ENCODE measurements at regions of chr1 and their contacts with region 1.

Region 1: GRCh38 chr1:152189657-152190442 is 30.8 kb upstream of the RPTN start:
- DNase-seq: peak; percentile 48
- H3K4me3 Mint-ChIP-seq: peak overlapping the region; percentile 51
- H3K27ac Mint-ChIP-seq: no peak overlapping the region
- H3K4me1 Mint-ChIP-seq: peaks cover 4% of the 10 kb centered on the region
- H3K27me3 Mint-ChIP-seq: peaks cover 50% of the 10 kb centered on the region

Region 2: DNA sequence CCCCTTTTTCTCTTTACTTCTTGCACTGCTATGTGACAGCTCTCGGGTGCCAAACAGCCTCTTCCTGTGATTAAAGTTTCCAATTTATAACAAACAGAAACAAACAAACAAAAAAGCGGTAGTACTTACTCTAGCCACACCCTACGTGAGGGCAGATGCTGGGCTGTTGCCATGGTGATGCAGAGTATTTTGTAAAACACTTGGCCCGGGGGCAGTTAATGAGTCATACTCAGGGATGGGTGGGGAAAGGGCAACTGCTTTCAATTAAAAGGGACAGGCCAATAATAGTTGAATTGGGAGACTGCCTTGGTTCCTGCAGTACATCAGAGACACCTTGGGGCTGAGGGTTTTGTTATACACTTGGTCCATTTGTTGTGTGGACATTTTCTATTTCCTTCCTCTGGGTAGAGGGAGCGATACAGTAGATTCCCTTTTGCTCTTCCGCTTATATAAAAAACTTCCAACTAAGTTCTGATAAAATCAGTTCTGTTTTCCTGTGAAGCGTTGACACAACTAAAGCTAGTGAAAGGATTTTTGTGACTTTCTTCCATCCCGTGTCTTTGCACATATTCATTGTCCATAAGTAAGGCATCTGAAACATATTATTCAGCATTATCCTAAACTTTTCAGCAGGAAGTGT is 244.0 kb before region 1 on chr1:
- intact Hi-C with region 1: loop called (anchors 10 kb)
- DNase-seq: peak; percentile 81
- H3K4me3 Mint-ChIP-seq: peak overlapping the region; percentile 34
- H3K27ac Mint-ChIP-seq: peak overlapping the region; percentile 93
- H3K4me1 Mint-ChIP-seq: peaks cover 34% of the 10 kb centered on the region
- H3K27me3 Mint-ChIP-seq: no peaks in the 10 kb centered on the region

Region 3: GRCh38 chr1:152110860-152111514 is 78.9 kb before region 1 on chr1:
- intact Hi-C with region 1: loop called (anchors 2 kb)
- DNase-seq: peak; percentile 29
- H3K4me3 Mint-ChIP-seq: no peak overlapping the region
- H3K27ac Mint-ChIP-seq: no peak overlapping the region
- H3K4me1 Mint-ChIP-seq: peaks cover 2% of the 10 kb centered on the region
- H3K27me3 Mint-ChIP-seq: peaks cover 3% of the 10 kb centered on the region

Region 4: GRCh38 chr1:152347116-152347728 is 157.4 kb after region 1 on chr1:
- intact Hi-C with region 1: loop called (anchors 2 kb)
- DNase-seq: peak; percentile 16
- H3K4me3 Mint-ChIP-seq: no peak overlapping the region
- H3K27ac Mint-ChIP-seq: no peak overlapping the region
- H3K4me1 Mint-ChIP-seq: no peaks in the 10 kb centered on the region
- H3K27me3 Mint-ChIP-seq: peaks cover 31% of the 10 kb centered on the region

Region 5: GRCh38 chr1:152440635-152441471 is 251.0 kb after region 1 on chr1:
- intact Hi-C with region 1: loop called (anchors 5 kb)
- DNase-seq: peak; percentile 54
- H3K4me3 Mint-ChIP-seq: no peak overlapping the region
- H3K27ac Mint-ChIP-seq: no peak overlapping the region
- H3K4me1 Mint-ChIP-seq: peaks cover 1% of the 10 kb centered on the region
- H3K27me3 Mint-ChIP-seq: peaks cover 25% of the 10 kb centered on the region

Region 6: DNA sequence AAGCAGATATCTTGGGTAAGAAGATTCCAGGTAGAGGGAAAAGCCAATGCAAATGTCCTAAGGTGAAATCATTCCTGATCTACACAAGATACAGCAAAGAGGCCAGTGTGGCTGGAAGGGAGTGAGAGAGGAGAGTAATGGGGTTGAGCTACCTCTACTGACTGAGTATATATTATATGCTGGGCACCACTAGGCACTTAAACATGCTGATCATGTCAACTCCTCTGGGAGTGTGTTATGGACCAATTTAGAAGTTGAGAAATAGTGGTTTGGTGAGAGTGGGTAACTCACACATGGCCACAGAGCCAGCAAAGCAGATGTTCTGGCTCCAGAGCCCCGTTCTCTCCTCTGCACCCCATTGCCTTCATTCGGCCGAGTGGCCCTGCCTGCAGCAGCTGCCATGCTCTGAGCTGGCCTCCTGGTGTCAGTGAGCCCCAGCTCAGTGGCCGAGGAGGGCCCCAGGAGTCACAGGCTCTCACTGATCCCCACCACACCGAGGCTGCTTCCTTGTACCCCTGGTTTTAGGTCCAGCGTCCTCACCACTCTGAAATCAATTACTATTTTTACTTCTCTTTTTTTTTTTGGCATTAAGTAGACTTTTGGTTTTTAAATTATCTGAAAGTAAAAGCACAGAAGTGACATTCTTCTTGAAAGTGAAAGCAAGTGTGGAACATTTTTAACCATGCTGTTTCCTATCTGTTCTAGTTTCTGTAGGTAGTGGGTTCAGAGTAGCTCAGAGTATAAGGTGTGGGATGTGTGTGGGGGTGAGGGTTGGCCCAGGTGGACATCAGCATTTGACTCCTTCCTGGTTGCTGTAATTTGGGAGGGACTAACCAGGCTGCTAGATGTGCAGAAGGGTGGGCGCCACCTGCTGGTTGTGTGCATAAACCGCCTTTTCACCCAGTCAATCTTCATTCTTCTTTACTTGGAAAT is 270.0 kb after region 1 on chr1:
- intact Hi-C with region 1: loop called (anchors 1 kb)
- DNase-seq: peak; percentile 63
- H3K4me3 Mint-ChIP-seq: peak overlapping the region; percentile 34
- H3K27ac Mint-ChIP-seq: peak overlapping the region; percentile 76
- H3K4me1 Mint-ChIP-seq: peaks cover 27% of the 10 kb centered on the region
- H3K27me3 Mint-ChIP-seq: peaks cover 10% of the 10 kb centered on the region